ENCODE measurements at regions of chr19 and their contacts with region 1.

Region 1: GRCh38 chr19:3163230-3163886 is 15.2 kb upstream of the S1PR4 start:
- DNase-seq: peak; percentile 61 to 82
- H3K4me3 ChIP-seq: no peak overlapping the region
- H3K4me1 ChIP-seq: peaks cover 3% of the 10 kb centered on the region; the same call in 1 of the 2 replicates
- H3K27me3 ChIP-seq: no peaks in the 10 kb centered on the region

Region 2: GRCh38 chr19:2469102-2469914 is 694.0 kb before region 1 on chr19:
- in situ Hi-C with region 1: no loop called
- DNase-seq: no peak
- H3K4me3 ChIP-seq: no peak overlapping the region
- H3K4me1 ChIP-seq: 0 out of 2 replicates have a peak, but pooled peaks cover 2% of the 10 kb centered on the region
- H3K27me3 ChIP-seq: no peaks in the 10 kb centered on the region

Region 3: GRCh38 chr19:2950286-2951124 is 212.9 kb before region 1 on chr19:
- in situ Hi-C with region 1: loop called (anchors 10 kb)
- DNase-seq: peak; percentile 98 to 100
- H3K4me3 ChIP-seq: peak overlapping the region; percentile 82
- H3K4me1 ChIP-seq: peaks cover 6% of the 10 kb centered on the region
- H3K27me3 ChIP-seq: no peaks in the 10 kb centered on the region

Region 4: GRCh38 chr19:3047425-3048189 is 115.8 kb before region 1 on chr19:
- in situ Hi-C with region 1: no loop called
- DNase-seq: peak; percentile 78 to 94
- H3K4me3 ChIP-seq: peak overlapping the region; percentile 8
- H3K4me1 ChIP-seq: no peaks in the 10 kb centered on the region; the same call in 1 of the 2 replicates
- H3K27me3 ChIP-seq: no peaks in the 10 kb centered on the region